Ascending aorta (tissue), 2 donors: ENCODE measurements at regions of chr10 and their contacts with region 1.

Region 1: GRCh38 chr10:104353325-104354048 is at the start of gene CFAP58:
- DNase-seq: peak; percentile 89 to 97
- H3K4me3 ChIP-seq: peak within 1 kb of the TSS; percentile 50 to 66
- H3K27ac ChIP-seq: no peak within 1 kb of the TSS
- H3K4me1 ChIP-seq: peaks cover 2 to 12% of the 10 kb centered on the region in 2 donors
- H3K27me3 ChIP-seq: no peaks in the 10 kb centered on the region
- CTCF ChIP-seq: peak; percentile 64 to 75 (median 70)
- total RNA-seq, gene CFAP58: not detected

Region 2: DNA sequence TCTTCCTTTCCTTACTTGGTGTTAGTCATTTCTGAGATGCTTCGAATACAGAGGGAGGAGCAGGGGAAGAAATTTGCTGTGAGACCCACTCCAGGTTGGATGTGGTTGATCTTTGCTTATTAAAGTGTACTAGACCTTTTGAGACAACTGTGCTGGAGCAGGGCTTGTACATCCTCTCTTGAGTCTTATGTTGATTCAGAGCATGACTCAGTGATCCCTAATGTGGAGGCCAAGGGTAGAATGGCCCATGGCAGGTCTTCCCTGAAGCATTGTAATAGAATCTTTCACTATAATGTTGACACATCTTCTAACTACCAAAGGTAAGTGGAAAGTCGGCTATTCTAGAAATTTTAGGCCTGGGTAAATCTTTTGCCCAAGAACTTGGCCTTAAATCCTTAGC is 248.6 kb before region 1 on chr10:
- intact Hi-C with region 1: no loop called
- DNase-seq: no peak
- H3K4me3 ChIP-seq: no peak overlapping the region
- H3K27ac ChIP-seq: no peak overlapping the region
- H3K4me1 ChIP-seq: peaks cover 0 to 8% of the 10 kb centered on the region in 2 donors
- H3K27me3 ChIP-seq: no peaks in the 10 kb centered on the region
- CTCF ChIP-seq: no peak

Region 3: DNA sequence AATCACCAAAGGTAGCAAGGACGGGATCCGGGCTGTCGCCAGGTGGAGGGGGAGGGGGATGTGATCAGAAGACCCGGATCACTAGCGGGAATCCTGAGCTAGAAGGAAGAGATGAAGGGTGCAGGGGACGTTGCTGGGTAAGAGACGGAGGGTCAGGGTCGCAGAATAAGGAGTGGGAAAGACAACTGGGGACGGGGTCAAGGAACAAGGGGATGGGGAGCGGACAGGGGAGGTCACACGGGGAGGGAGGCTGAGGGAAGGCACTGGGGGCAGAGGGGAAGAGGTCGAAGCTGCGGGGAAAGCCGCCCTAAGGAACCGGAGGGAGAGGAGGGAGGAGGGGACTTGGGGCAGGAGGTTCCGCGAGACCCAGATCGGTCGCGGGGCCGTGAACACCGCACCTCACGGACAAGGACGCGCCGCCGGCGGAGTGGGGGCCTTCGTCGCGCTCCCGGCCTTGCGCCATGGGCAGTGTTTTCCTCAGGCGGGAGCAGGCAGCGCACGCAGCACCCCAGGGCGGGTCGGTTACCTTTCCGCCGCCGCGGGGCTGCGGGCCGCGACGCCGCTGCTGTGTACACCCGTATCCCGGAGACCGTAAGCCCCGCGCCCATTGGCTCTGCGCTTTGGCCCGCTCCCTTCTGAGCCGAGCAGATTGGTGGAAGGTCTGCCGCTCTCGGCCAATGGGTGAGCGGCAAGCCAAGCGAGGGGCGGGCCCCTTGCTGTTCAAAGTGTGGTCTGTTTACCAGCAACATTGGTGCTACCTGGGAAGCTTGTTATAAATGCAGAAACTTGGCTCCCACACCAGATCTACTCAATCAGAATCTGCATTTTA is 121.5 kb before region 1 on chr10 and contains the start of gene CFAP43:
- intact Hi-C with region 1: loop called (anchors 1 kb)
- DNase-seq: peak; percentile 92 to 99
- H3K4me3 ChIP-seq: peak within 1 kb of the TSS; percentile 71 to 88
- H3K27ac ChIP-seq: no peak within 1 kb of the TSS
- H3K4me1 ChIP-seq: peaks cover 0 to 7% of the 10 kb centered on the region in 2 donors
- H3K27me3 ChIP-seq: no peaks in the 10 kb centered on the region
- CTCF ChIP-seq: no peak
- total RNA-seq, gene CFAP43: 0.96 TPM

Region 4: GRCh38 chr10:104268716-104269645 is 84.5 kb before region 1 on chr10 and contains the start of gene GSTO2:
- intact Hi-C with region 1: loop called (anchors 1 kb)
- DNase-seq: peak; percentile 99 to 100
- H3K4me3 ChIP-seq: peak within 1 kb of the TSS; percentile 97 to 98
- H3K27ac ChIP-seq: peak within 1 kb of the TSS; percentile 91 to 97
- H3K4me1 ChIP-seq: peaks cover 0 to 11% of the 10 kb centered on the region in 2 donors
- H3K27me3 ChIP-seq: no peaks in the 10 kb centered on the region
- CTCF ChIP-seq: no peak
- total RNA-seq, gene GSTO2: not detected

Region 5: DNA sequence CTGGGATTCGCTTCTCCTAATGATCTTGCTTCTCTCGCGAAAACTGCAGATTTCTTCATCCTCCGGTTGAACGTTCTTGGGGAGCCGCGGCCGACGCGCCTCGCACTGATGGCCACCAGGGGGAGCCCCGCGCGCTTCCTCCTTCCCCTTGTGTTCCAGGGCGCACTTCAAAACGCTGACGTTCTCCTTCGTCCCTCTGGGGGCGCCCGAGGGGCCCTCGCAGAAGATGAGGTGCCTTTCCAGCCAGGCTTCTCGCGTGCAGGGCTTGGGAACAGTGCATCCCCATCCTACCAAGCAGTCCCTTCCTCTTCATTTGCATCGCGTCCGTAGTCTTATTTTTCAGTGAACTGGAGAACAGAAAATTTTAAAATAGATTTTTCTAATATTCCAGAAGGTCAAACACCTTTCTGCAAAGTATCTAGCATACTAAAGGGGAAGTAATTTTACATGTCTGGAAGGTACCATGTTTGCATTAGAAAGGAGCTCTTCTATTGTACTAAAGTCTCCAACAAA is 62.0 kb before region 1 on chr10:
- intact Hi-C with region 1: loop called (anchors 1 kb)
- DNase-seq: peak; percentile 59 to 95
- H3K4me3 ChIP-seq: peak overlapping the region in 1 of 2 donors; percentile 6
- H3K27ac ChIP-seq: no peak overlapping the region
- H3K4me1 ChIP-seq: peaks cover 0 to 3% of the 10 kb centered on the region in 2 donors
- H3K27me3 ChIP-seq: no peaks in the 10 kb centered on the region
- CTCF ChIP-seq: peak; percentile 99 to 100 (median 100)

Region 6: DNA sequence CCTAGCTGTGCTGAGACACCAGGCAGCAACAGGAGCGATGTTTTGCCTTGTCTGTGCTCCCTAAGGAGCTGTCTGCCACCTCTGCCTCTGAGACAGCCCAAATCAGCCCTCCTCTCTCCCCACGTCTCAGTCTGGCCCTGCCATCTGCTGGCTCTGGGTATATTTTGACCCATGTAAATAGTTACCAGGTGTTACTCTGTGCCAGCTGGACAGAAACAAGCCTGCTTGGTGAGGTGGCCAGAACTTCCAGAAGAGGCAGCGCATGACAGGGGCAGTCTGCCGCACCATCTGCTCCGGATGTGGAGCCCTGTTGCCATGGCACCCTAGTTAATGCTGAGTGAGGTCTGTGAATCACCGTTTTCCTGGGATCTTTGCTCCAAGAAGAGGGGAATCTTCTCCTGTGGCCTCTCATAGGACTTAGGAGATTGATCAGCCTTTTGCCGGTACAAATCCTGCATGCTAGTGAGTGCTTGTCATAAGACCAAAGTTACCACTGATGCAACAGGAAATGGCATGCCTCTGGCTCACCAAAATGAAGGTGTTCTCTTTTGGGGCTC is 52.7 kb before region 1 on chr10:
- intact Hi-C with region 1: loop called (anchors 2 kb)
- DNase-seq: peak; percentile 79 to 96
- H3K4me3 ChIP-seq: peak overlapping the region; percentile 16 to 40
- H3K27ac ChIP-seq: peak overlapping the region; percentile 95 to 96
- H3K4me1 ChIP-seq: peaks cover 6 to 27% of the 10 kb centered on the region in 2 donors
- H3K27me3 ChIP-seq: no peaks in the 10 kb centered on the region
- CTCF ChIP-seq: peak in 1 of 3 experiments; percentile 24

Region 7: GRCh38 chr10:104337974-104338735 is 15.3 kb before region 1 on chr10 and contains the start of gene ITPRIP:
- intact Hi-C with region 1: loop called (anchors 1 kb)
- DNase-seq: peak; percentile 54 to 89
- H3K4me3 ChIP-seq: peak within 1 kb of the TSS; percentile 63 to 86
- H3K27ac ChIP-seq: peak within 1 kb of the TSS; percentile 92 to 98
- H3K4me1 ChIP-seq: peaks cover 6 to 44% of the 10 kb centered on the region in 2 donors
- H3K27me3 ChIP-seq: no peaks in the 10 kb centered on the region
- CTCF ChIP-seq: peak; percentile 7 to 17 (median 12)
- total RNA-seq, gene ITPRIP: 51.0 TPM

Region 8: GRCh38 chr10:104376784-104377300 is 23.4 kb after region 1 on chr10:
- intact Hi-C with region 1: no loop called
- DNase-seq: no peak
- H3K4me3 ChIP-seq: no peak overlapping the region
- H3K27ac ChIP-seq: no peak overlapping the region
- H3K4me1 ChIP-seq: no peaks in the 10 kb centered on the region
- H3K27me3 ChIP-seq: no peaks in the 10 kb centered on the region
- CTCF ChIP-seq: no peak

Region 9: DNA sequence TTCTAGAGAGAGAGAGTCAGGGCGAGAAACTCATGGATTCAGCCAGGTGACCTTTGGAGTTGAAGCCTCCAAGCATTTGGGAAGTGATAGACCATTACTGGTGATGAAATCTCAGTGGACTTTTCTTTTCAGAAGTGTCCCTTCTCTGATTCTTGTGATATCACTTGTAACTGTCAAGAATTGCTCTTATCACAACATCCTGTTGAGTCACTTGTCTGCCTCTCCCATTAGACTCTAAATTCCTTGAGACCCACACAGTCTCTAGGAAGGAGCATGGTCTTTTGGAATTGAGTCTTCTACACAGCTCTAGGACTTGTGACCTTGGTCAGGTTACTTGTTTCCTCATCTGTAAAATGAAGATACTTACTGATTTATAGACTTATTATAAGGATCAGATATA is 81.1 kb after region 1 on chr10:
- intact Hi-C with region 1: no loop called
- DNase-seq: no peak
- H3K4me3 ChIP-seq: no peak overlapping the region
- H3K27ac ChIP-seq: no peak overlapping the region
- H3K4me1 ChIP-seq: no peaks in the 10 kb centered on the region
- H3K27me3 ChIP-seq: no peaks in the 10 kb centered on the region
- CTCF ChIP-seq: no peak